Activated CD4-positive, alpha-beta T cell treated with anti-CD3 and anti-CD28 coated beads for 36 hours (primary cell): ENCODE measurements at regions of chr7 and their contacts with region 1.

Region 1: DNA sequence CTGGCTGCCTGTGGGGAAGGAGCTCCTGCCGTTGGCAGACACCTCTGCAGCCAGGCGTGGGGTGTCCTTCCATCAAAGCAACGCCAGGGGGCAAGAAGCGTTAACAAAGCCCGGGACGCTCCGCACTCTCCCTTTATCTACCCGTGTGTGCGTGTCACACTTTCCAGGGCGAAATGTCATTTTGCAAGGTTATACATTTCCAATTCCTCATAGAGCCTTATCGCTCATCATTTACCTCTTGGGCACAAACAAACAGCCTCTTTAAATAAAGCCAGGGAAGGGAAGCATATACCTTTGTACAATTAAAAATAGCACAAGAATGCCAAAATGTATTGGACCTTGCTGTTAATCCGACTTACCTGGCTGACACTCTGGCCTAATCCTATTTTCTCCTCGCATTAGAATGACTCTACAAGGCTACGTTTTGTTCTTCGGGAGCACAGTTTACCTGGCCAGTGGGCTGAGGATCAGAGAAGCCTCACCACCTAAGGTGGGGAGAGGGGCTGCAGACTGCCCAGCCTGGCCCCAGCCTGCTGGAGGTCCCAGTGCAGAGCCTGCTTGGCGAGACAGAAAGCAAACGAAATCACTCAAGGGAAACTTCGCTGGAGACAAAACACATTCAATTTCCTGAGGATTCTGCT is 77.6 kb upstream of the EN2 start:
- DNase-seq: peak; percentile 89
- ATAC-seq: peak; percentile 94
- H3K4me3 Mint-ChIP-seq: no peak overlapping the region
- H3K27ac Mint-ChIP-seq: no peak overlapping the region
- H3K4me1 Mint-ChIP-seq: peaks cover 23% of the 10 kb centered on the region
- H3K27me3 Mint-ChIP-seq: peaks cover 79% of the 10 kb centered on the region

Region 2: GRCh38 chr7:155322530-155322929 is 57.8 kb before region 1 on chr7:
- CTCF ChIA-PET with region 1: no interaction called
- POLR2A ChIA-PET with region 1: no interaction called
- intact Hi-C with region 1: no loop called
- DNase-seq: no peak
- ATAC-seq: no peak
- H3K4me3 Mint-ChIP-seq: no peak overlapping the region
- H3K27ac Mint-ChIP-seq: no peak overlapping the region
- H3K4me1 Mint-ChIP-seq: no peaks in the 10 kb centered on the region
- H3K27me3 Mint-ChIP-seq: peaks cover 2% of the 10 kb centered on the region

Region 3: GRCh38 chr7:155356323-155357105 is 23.8 kb before region 1 on chr7:
- CTCF ChIA-PET with region 1: interaction called, 11 read pairs
- POLR2A ChIA-PET with region 1: no interaction called
- intact Hi-C with region 1: no loop called
- DNase-seq: no peak
- ATAC-seq: no peak
- H3K4me3 Mint-ChIP-seq: no peak overlapping the region
- H3K27ac Mint-ChIP-seq: no peak overlapping the region
- H3K4me1 Mint-ChIP-seq: no peaks in the 10 kb centered on the region
- H3K27me3 Mint-ChIP-seq: peaks cover 36% of the 10 kb centered on the region

Region 4: GRCh38 chr7:155769701-155770100 is 389.4 kb after region 1 on chr7:
- CTCF ChIA-PET with region 1: interaction called, 6 read pairs
- POLR2A ChIA-PET with region 1: no interaction called
- intact Hi-C with region 1: loop called (anchors 5 to 10 kb)
- DNase-seq: no peak
- ATAC-seq: no peak
- H3K4me3 Mint-ChIP-seq: no peak overlapping the region
- H3K27ac Mint-ChIP-seq: no peak overlapping the region
- H3K4me1 Mint-ChIP-seq: peaks cover 15% of the 10 kb centered on the region
- H3K27me3 Mint-ChIP-seq: no peaks in the 10 kb centered on the region